Activated CD4-positive, alpha-beta memory T cell treated with anti-CD3 and anti-CD28 coated beads for 36 hours (primary cell): ENCODE measurements at regions of chr4 and their contacts with region 1.

Region 1: GRCh38 chr4:121227341-121227792 is 63.2 kb upstream of the TNIP3 start:
- DNase-seq: no peak
- H3K4me3 Mint-ChIP-seq: peak overlapping the region; percentile 72
- H3K27ac Mint-ChIP-seq: peak overlapping the region; percentile 86
- H3K4me1 Mint-ChIP-seq: peaks cover 59% of the 10 kb centered on the region
- H3K27me3 Mint-ChIP-seq: no peaks in the 10 kb centered on the region

Region 2: GRCh38 chr4:121139533-121140222 is 87.7 kb before region 1 on chr4:
- CTCF ChIA-PET with region 1: no interaction called
- POLR2A ChIA-PET with region 1: no interaction called
- intact Hi-C with region 1: loop called (anchors 1 kb)
- DNase-seq: no peak
- H3K4me3 Mint-ChIP-seq: no peak overlapping the region
- H3K27ac Mint-ChIP-seq: no peak overlapping the region
- H3K4me1 Mint-ChIP-seq: peaks cover 37% of the 10 kb centered on the region
- H3K27me3 Mint-ChIP-seq: no peaks in the 10 kb centered on the region

Region 3: DNA sequence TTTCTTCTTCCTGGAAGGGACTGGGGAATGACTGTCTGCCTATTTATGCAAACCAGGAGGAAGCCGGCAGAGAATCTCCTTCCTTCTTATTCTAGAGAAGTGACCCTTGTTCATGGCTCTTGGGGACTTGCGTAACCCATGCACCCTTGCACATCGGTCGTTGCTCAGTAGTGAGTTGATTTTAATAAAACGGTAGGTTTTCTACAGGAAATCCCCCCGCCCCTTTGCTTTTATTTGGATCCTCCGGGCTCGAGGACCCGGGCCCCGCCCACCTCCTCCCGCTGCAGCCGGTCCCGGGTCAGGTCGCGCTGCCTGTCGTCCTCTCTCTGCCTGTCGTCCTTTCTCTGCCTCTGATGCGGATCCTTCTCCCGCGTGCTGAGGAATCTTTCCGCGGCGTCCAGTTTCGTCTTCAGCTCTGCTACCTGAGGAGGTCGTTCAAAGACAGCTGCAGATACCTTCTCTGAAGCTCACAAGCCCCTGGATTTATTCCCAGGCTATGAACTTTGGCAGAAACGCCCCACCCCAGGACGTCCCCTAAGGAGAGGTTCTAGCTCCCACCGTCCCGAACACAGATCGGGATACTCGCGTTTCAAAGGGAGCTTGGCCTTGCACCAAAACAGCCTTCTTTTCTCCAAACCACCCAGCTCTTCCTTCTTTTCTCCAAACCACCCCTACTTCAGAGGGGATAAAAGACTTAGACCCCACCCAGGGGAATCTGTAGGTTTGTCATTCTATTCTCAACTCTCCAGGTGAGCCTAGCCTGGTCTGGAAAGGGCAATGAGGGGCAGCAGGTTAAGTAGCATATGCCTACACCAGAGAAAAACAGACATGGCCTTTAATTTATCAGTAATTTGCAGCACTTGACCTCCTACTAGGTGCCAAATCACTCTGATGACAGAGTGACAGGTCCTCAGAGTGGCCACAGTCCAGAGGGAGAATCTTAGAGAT is 70.3 kb before region 1 on chr4:
- CTCF ChIA-PET with region 1: no interaction called
- POLR2A ChIA-PET with region 1: no interaction called
- intact Hi-C with region 1: loop called (anchors 1 kb)
- DNase-seq: peak; percentile 21
- H3K4me3 Mint-ChIP-seq: peak overlapping the region; percentile 68
- H3K27ac Mint-ChIP-seq: peak overlapping the region; percentile 20
- H3K4me1 Mint-ChIP-seq: peaks cover 42% of the 10 kb centered on the region
- H3K27me3 Mint-ChIP-seq: peaks cover 12% of the 10 kb centered on the region

Region 4: DNA sequence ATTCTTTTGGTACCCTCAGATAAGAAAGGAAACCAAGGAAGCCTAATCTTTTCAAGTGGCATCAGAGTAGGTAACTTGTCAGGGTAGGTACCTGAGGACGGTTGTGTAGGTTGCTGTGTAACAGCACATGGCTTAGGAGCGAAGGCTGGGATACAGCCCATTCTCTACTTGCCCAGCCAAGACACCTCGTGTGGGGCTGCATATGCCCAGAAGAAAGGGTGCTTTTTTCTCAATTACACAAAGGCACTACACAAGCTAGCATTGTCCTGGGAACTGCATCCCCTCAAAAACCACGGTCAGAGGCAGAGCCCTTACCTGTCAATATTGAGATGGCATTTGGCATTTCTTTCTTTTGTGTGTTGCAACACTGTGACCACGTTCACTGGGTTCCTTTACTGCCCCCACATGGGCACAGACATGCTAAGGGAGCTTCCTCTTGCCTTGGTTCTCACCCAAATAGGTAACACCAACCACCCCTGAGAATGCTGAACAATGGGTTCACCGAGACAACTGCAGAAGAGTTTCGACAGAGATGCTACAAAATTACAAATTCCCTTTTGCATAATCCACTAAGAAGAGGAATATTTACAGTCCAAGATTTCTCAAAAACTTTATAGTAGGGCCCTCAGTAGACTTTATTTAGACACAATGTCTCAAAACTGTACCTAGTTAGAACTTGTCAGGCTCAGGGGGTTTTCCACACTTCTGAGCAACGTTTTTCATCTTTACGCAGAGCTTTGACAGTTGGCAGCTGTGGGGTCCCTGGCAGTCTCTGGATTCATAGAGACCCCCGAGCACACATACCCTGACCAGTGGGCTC is 27.4 kb before region 1 on chr4:
- CTCF ChIA-PET with region 1: interaction called, 7 read pairs
- POLR2A ChIA-PET with region 1: interaction called, 3 read pairs
- intact Hi-C with region 1: loop called (anchors 1 kb)
- DNase-seq: peak; percentile 66
- H3K4me3 Mint-ChIP-seq: peak overlapping the region; percentile 10
- H3K27ac Mint-ChIP-seq: peak overlapping the region; percentile 60
- H3K4me1 Mint-ChIP-seq: peaks cover 34% of the 10 kb centered on the region
- H3K27me3 Mint-ChIP-seq: no peaks in the 10 kb centered on the region

Region 5: DNA sequence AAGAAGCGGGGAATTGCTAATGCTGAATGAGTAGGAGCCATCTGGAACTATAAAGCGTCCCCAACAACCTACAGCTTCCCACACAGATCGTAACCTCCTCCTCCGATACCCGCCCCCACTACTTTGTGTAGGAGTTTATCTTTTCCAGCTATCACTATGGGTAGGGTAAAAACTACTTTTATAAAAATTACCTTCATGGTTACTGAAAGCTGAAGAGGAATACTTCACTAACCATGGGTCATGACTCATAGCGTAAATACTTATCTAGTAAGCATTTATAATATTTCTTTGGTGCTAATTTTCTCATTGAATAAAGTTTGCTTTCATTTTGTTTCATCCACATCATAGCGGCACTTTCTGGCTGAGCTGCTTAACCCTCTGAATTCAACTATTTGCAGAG is 16.1 kb after region 1 on chr4:
- CTCF ChIA-PET with region 1: interaction called, 16 read pairs
- POLR2A ChIA-PET with region 1: interaction called, 14 read pairs
- intact Hi-C with region 1: loop called (anchors 1 kb)
- DNase-seq: peak; percentile 49
- H3K4me3 Mint-ChIP-seq: peak overlapping the region; percentile 46
- H3K27ac Mint-ChIP-seq: peak overlapping the region; percentile 76
- H3K4me1 Mint-ChIP-seq: peaks cover 40% of the 10 kb centered on the region
- H3K27me3 Mint-ChIP-seq: peaks cover 3% of the 10 kb centered on the region

Region 6: GRCh38 chr4:121277624-121278023 is 50.3 kb after region 1 on chr4:
- CTCF ChIA-PET with region 1: interaction called, 4 read pairs
- POLR2A ChIA-PET with region 1: interaction called, 6 read pairs
- intact Hi-C with region 1: loop called (anchors 1 kb)
- DNase-seq: no peak
- H3K4me3 Mint-ChIP-seq: no peak overlapping the region
- H3K27ac Mint-ChIP-seq: no peak overlapping the region
- H3K4me1 Mint-ChIP-seq: peaks cover 28% of the 10 kb centered on the region
- H3K27me3 Mint-ChIP-seq: peaks cover 10% of the 10 kb centered on the region

Region 7: GRCh38 chr4:121758925-121759568 is 531.7 kb after region 1 on chr4:
- CTCF ChIA-PET with region 1: no interaction called
- POLR2A ChIA-PET with region 1: no interaction called
- intact Hi-C with region 1: no loop called
- DNase-seq: no peak
- H3K4me3 Mint-ChIP-seq: no peak overlapping the region
- H3K27ac Mint-ChIP-seq: no peak overlapping the region
- H3K4me1 Mint-ChIP-seq: peaks cover 8% of the 10 kb centered on the region
- H3K27me3 Mint-ChIP-seq: peaks cover 47% of the 10 kb centered on the region